ENCODE measurements at regions of chrX and their contacts with region 1.

Region 1: GRCh38 chrX:12814420-12814819 is 23.2 kb downstream of the PRPS2 start:
- H3K4me3 ChIP-seq: no peak overlapping the region
- H3K27ac ChIP-seq: no peak overlapping the region
- H3K4me1 ChIP-seq: no peaks in the 10 kb centered on the region
- CTCF ChIP-seq: 0 out of 2 replicates have a peak, but pooled peaks have one; percentile 15

Region 2: GRCh38 chrX:12798601-12799000 is 15.8 kb before region 1 on chrX:
- CTCF ChIA-PET with region 1: interaction called, 10 read pairs
- POLR2A ChIA-PET with region 1: no interaction called
- H3K4me3 ChIP-seq: no peak overlapping the region
- H3K27ac ChIP-seq: no peak overlapping the region
- H3K4me1 ChIP-seq: no peaks in the 10 kb centered on the region
- CTCF ChIP-seq: no peak

Region 3: GRCh38 chrX:12894074-12895030 is 79.9 kb after region 1 on chrX:
- CTCF ChIA-PET with region 1: interaction called, 19 read pairs
- POLR2A ChIA-PET with region 1: no interaction called
- H3K4me3 ChIP-seq: no peak overlapping the region
- H3K27ac ChIP-seq: no peak overlapping the region
- H3K4me1 ChIP-seq: no peaks in the 10 kb centered on the region
- CTCF ChIP-seq: no peak

Region 4: GRCh38 chrX:12901486-12901885 is 87.1 kb after region 1 on chrX:
- CTCF ChIA-PET with region 1: interaction called, 24 read pairs
- POLR2A ChIA-PET with region 1: no interaction called
- H3K4me3 ChIP-seq: no peak overlapping the region
- H3K27ac ChIP-seq: no peak overlapping the region
- H3K4me1 ChIP-seq: no peaks in the 10 kb centered on the region
- CTCF ChIP-seq: peak; percentile 51

Region 5: DNA sequence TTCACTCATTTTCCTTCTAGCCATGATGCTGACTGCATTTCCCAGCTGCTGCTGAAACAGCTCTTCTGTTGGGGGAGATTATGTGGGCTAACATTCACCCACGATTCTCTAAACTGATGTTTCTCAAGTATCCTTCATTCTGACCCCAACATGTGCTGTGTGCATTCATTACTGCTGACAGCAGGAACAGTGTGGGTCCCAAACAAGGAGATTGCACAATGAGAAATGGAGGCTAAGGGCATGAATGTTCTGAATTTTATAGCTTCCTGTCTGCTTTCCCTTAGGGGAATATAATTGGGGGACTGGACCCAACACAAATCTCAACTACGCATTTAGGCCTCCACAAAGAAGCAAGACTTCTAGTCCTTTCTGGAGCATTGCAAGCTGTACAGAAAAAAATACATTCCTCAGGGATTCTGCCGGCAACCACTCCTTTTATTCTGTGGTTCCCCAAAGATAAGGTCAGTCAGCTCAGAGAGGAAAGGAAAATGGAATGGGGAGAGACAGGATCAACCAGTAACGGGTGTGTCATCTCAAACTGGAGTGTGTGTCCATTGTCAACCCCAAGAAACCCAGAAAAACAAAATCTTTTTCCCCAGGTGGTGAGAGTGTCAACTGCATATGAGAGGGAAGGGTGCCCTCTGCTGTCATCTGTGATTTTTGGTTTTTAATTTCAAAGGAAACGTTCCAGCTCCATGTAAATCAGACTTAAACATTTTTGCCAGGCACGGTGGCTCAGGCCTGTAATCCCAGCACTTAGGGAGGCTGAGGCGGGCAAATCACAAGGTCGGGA is 673.5 kb after region 1 on chrX:
- CTCF ChIA-PET with region 1: interaction called, 16 read pairs
- POLR2A ChIA-PET with region 1: no interaction called
- H3K4me3 ChIP-seq: no peak overlapping the region
- H3K27ac ChIP-seq: peak overlapping the region; percentile 92
- H3K4me1 ChIP-seq: peaks cover 12% of the 10 kb centered on the region
- CTCF ChIP-seq: peak; percentile 57

Region 6: GRCh38 chrX:13646154-13646549 is 831.7 kb after region 1 on chrX:
- CTCF ChIA-PET with region 1: interaction called, 15 read pairs
- POLR2A ChIA-PET with region 1: no interaction called
- H3K4me3 ChIP-seq: no peak overlapping the region
- H3K27ac ChIP-seq: no peak overlapping the region; the same call in 1 of the 2 replicates
- H3K4me1 ChIP-seq: peaks cover 5% of the 10 kb centered on the region; the same call in 1 of the 2 replicates
- CTCF ChIP-seq: no peak; the same call in 1 of the 2 replicates

Measured in HEK293 (cell line).